BJ (cell line): ENCODE measurements at regions of chr14 and their contacts with region 1.

Region 1: GRCh38 chr14:103232298-103232808 is 101.7 kb upstream of the EIF5 start:
- DNase-seq: no peak
- H3K4me3 ChIP-seq: no peak overlapping the region
- H3K27me3 ChIP-seq: peaks cover 2% of the 10 kb centered on the region; the same call in 1 of the 2 replicates
- CTCF ChIP-seq: no peak

Region 2: DNA sequence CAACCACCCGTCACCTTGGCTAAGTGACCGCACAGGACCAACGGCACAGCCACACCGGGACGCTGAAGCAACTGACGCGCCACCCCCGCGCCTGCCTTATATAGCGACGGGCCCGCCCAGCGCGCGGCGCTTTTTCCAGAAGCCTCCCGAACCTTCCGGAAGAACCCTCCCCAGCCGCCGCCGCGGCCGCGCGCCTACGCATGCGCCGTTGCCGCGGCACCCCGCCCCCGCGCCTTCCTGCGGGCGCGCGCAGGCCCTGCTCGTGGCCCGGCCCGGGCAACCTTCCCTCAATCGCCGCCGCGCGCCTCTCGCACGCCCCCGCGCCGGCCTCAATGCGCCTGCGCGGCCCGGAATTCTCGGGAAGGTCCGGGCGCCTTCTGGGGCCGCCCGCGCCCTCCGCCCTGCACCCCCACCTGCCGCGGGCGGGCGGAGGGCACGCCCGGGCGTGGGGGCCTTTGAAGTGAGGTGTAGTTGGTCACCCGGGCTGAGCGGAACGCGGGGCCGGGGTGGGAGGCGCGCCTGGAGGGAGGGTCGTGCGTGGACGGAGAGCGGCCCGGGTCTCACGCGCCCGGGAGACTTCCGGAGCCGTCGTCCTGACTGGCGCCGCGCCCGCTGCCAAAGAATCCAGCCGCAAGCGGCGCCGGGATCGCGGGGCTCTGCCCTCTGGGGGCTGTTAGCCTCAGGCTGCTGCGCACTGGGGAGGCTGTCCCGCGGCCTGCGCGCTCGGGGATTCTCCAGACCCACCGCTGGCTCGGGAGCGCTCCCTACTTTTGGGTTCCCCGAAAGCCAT is 1145.2 kb before region 1 on chr14 and contains the start of gene HSP90AA1:
- CTCF ChIA-PET with region 1: no interaction called
- POLR2A ChIA-PET with region 1: interaction called, 19 read pairs
- DNase-seq: peak; percentile 60
- H3K4me3 ChIP-seq: peak within 1 kb of the TSS; percentile 83
- H3K27me3 ChIP-seq: no peaks in the 10 kb centered on the region
- CTCF ChIP-seq: peak; percentile 34; the same call in 1 of the 2 replicates
- polyA plus RNA-seq, gene HSP90AA1: 222 and 440 TPM in 2 replicates

Region 3: GRCh38 chr14:103243764-103244737 is 11.7 kb after region 1 on chr14:
- CTCF ChIA-PET with region 1: no interaction called
- POLR2A ChIA-PET with region 1: no interaction called
- DNase-seq: no peak
- H3K4me3 ChIP-seq: no peak overlapping the region
- H3K27me3 ChIP-seq: peaks cover 1% of the 10 kb centered on the region; the same call in 1 of the 2 replicates
- CTCF ChIP-seq: no peak